Gastrocnemius medialis (tissue), 4 donors: ENCODE measurements at regions of chr14 and their contacts with region 1.

Region 1: DNA sequence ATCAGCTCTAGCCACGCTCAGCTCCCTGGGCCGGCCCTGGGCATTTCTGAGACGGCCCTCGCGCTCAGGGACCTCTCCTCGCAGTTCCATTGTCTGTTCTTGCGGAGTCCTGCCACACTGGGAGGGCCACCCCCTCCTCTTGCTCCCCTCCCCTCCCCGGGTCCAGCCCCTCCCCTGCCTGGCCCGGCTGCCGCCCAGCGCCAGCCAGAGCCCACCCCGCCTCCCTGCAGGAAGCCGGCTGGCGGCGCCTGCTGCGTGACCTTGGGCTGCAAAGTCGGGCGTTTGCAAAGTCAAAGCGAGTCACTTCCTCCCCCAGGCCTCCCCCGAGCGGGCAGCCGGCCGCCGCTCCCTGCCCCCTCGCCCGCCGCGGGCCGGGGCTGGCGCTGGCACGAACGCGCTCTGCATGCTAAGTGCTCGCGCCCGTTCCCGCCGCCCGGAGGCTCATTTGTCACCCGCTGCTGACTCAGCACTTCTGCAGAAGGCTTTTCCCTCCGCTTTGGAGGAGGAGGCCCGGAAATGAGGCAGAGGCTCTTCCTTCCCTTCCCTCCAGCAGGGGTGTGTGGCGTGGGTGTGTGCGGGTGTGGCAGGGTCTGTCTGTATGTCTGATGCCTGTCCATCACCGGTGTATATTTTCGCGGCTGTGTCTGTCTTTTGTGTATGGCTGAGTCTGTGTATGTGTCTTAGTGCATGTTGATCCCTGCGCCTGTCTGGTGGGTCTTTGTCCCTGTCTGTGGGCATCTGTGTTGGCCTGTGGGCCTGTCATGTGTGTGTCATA is 72.0 kb downstream of the IRF2BPL start:
- DNase-seq: peak; percentile 75 to 90
- ATAC-seq: peak; percentile 47 to 57
- H3K4me3 ChIP-seq: peak overlapping the region; percentile 50 to 62 (median 58)
- H3K27ac ChIP-seq: peak overlapping the region; percentile 96 to 99 (median 97)
- H3K4me1 ChIP-seq: peaks cover 49 to 51% of the 10 kb centered on the region in 2 donors
- H3K27me3 ChIP-seq: no peaks in the 10 kb centered on the region
- CTCF ChIP-seq: peak in 2 of 5 experiments; percentile 10 to 28
- POLR2A ChIP-seq: peak in 1 of 2 donors; percentile 41

Region 2: DNA sequence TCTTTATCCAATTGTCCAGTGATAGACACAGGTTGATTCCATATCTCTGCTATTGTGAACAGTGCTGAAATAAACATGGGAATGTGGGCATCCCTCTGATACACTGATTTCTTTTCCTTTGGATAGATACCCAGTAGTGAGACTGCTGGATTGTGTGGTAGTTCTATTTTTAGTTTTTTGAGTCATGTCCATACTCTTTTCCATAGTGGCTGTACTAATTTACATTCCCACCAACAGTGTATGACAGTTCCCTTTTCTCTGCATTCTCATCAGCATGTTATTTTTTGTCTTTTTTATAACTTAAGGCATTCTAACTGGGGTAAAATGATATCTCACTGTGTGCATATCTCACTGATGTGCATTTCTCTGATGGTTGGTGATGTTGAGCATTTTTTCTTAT is 220.0 kb before region 1 on chr14:
- in situ Hi-C with region 1: no loop called
- intact Hi-C with region 1: no loop called
- DNase-seq: no peak
- ATAC-seq: no peak
- H3K4me3 ChIP-seq: no peak overlapping the region
- H3K27ac ChIP-seq: no peak overlapping the region
- H3K4me1 ChIP-seq: no peaks in the 10 kb centered on the region
- H3K27me3 ChIP-seq: no peaks in the 10 kb centered on the region
- CTCF ChIP-seq: no peak
- POLR2A ChIP-seq: no peak

Region 3: GRCh38 chr14:77000340-77001270 is 44.1 kb after region 1 on chr14:
- in situ Hi-C with region 1: no loop called
- intact Hi-C with region 1: loop called (anchors 2 kb)
- DNase-seq: peak; percentile 52 to 87
- ATAC-seq: peak; percentile 95 to 97
- H3K4me3 ChIP-seq: peak overlapping the region; percentile 5 to 46 (median 30)
- H3K27ac ChIP-seq: peak overlapping the region; percentile 73 to 89 (median 85)
- H3K4me1 ChIP-seq: peaks cover 18 to 25% of the 10 kb centered on the region in 2 donors
- H3K27me3 ChIP-seq: no peaks in the 10 kb centered on the region
- CTCF ChIP-seq: no peak
- POLR2A ChIP-seq: no peak

Region 4: GRCh38 chr14:77023001-77023996 is 66.8 kb after region 1 on chr14:
- in situ Hi-C with region 1: no loop called
- intact Hi-C with region 1: loop called (anchors 2 kb)
- DNase-seq: no peak
- ATAC-seq: peak; percentile 45 to 61
- H3K4me3 ChIP-seq: peak overlapping the region in 3 of 4 donors; percentile 53 to 94 (median 88)
- H3K27ac ChIP-seq: peak overlapping the region; percentile 95 to 100 (median 100)
- H3K4me1 ChIP-seq: peaks cover 36 to 39% of the 10 kb centered on the region in 2 donors
- H3K27me3 ChIP-seq: no peaks in the 10 kb centered on the region
- CTCF ChIP-seq: peak in 2 of 5 experiments; percentile 8 to 17
- POLR2A ChIP-seq: no peak

Region 5: DNA sequence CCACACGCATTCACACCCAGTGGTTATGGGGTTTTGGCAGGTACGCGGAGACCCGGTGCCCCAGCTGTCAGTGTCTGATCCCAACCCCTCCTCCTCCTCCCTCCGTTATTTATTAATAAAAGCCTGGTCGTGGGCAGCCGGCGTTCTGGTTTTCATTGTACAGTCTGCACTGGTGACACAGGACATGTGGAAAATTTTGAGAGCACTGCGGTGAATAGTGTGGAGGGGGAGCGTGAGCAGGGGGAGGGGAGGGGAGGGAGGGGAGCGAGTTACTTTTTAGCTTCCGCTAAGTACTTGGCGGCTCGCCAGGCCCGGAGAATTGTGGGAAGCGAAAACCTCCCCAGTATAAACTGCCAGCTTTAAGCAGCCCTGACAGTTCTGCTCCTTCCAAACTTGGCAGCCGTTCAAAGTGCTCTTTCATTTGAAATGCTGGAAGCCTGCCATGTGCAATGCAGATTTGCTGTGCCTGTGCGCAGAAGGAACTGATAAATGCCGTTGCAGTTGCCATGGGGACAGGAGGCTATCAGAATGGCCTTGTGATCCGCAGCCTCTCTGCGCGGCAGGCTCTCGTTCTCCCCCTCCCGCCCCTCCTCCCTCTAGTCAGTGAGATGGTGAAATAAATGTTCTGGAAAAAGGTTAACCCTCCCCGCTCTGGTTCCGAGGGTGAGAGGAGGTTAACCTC is 83.7 kb after region 1 on chr14:
- in situ Hi-C with region 1: no loop called
- intact Hi-C with region 1: loop called (anchors 1 kb)
- DNase-seq: peak; percentile 94 to 96
- ATAC-seq: peak; percentile 66
- H3K4me3 ChIP-seq: peak overlapping the region; percentile 52 to 65 (median 58)
- H3K27ac ChIP-seq: peak overlapping the region; percentile 84 to 100 (median 96)
- H3K4me1 ChIP-seq: peaks cover 75 to 90% of the 10 kb centered on the region in 2 donors
- H3K27me3 ChIP-seq: no peaks in the 10 kb centered on the region
- CTCF ChIP-seq: no peak
- POLR2A ChIP-seq: peak in 1 of 2 donors; percentile 44